ENCODE measurements at regions of chr7 and their contacts with region 1.

Region 1: DNA sequence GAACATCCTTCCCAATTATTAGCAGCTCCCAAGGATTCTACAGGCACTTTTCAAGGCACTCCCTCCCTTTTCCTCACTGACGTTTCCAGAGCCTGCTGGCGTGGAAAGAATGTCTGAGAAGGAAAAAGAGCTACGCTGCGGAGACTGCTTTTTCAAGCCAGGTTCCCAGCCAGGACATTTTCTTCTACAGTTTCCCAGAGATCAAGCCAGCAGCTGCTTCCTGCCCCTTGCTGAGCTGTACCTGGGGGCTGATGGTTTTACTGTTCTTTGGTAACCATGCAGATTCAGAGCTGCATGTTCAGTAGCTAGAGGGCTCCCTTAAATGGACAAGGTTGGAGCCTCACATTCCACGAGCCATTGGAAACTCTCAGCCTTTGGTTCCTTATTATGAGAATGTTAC is 133.4 kb downstream of the EVX1 start:
- DNase-seq: no peak
- H3K4me3 ChIP-seq: no peak overlapping the region
- H3K4me3 Mint-ChIP-seq: no peak overlapping the region
- H3K27ac ChIP-seq: no peak overlapping the region
- H3K27ac Mint-ChIP-seq: no peak overlapping the region
- H3K4me1 ChIP-seq: peaks cover 5 to 14% of the 10 kb centered on the region in 2 donors
- H3K4me1 Mint-ChIP-seq: peaks cover 11% of the 10 kb centered on the region
- H3K27me3 ChIP-seq: no peaks in the 10 kb centered on the region
- H3K27me3 Mint-ChIP-seq: peaks cover 2 to 14% (median 14%) of the 10 kb centered on the region in 3 donors
- CTCF ChIP-seq: no peak

Region 2: DNA sequence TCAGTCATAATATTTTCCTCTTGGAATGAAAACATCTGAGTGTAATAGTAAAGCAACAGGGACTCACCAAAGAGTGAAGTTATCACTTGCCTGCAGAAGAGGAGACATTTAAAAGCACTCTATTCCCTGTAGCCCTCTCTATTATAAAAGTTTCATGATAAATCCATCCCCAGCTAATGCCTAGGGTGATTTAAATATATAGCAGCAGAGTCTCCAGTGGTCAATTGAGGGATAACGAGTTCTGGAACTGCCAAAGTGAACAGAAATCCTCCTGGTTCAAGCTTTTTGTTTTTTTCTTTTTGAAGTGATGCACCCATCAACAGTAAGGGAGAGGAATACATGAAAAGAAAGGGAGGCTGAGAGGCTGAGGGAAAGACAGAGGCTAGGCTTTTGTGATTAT is 46.0 kb before region 1 on chr7:
- intact Hi-C with region 1: loop called in 1 of 2 experiments (anchors 10 kb)
- DNase-seq: no peak
- H3K4me3 ChIP-seq: no peak overlapping the region
- H3K4me3 Mint-ChIP-seq: no peak overlapping the region
- H3K27ac ChIP-seq: no peak overlapping the region
- H3K27ac Mint-ChIP-seq: no peak overlapping the region
- H3K4me1 ChIP-seq: no peaks in the 10 kb centered on the region
- H3K4me1 Mint-ChIP-seq: peaks cover 5% of the 10 kb centered on the region
- H3K27me3 ChIP-seq: no peaks in the 10 kb centered on the region
- H3K27me3 Mint-ChIP-seq: peaks cover 1 to 6% (median 5%) of the 10 kb centered on the region in 3 donors
- CTCF ChIP-seq: no peak